GM10248 (cell line): ENCODE measurements at regions of chr18 and their contacts with region 1.

Region 1: GRCh38 chr18:79528846-79529245 is 133.1 kb downstream of the NFATC1 start:
- DNase-seq: peak; percentile 81
- CTCF ChIP-seq: peak; percentile 84

Region 2: DNA sequence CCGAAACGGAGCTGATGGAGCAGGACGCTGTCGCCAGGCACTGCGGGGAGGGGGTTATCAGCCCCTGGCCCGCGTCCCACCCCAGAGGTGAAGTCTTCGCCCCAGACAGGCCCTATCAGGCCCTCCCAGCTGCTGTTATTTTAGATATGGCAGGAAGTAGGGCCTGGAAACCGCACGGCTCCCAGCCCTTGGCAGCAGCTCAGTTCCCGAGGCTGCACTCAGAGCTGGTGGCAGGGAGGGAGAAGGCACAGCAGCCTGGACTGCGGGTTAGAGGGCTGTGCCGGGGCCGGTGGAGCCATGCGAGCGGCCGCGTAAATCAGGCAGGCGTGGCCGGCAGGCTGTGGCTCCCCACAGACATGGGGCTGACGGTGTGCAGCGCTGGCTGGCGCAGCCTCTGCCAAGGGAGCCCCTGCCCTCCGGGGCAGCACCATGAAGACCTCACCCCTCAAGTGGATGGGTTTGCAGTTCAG is 21.7 kb before region 1 on chr18:
- CTCF ChIA-PET with region 1: interaction called, 12 read pairs
- POLR2A ChIA-PET with region 1: interaction called, 3 read pairs
- DNase-seq: no peak
- CTCF ChIP-seq: no peak

Region 3: DNA sequence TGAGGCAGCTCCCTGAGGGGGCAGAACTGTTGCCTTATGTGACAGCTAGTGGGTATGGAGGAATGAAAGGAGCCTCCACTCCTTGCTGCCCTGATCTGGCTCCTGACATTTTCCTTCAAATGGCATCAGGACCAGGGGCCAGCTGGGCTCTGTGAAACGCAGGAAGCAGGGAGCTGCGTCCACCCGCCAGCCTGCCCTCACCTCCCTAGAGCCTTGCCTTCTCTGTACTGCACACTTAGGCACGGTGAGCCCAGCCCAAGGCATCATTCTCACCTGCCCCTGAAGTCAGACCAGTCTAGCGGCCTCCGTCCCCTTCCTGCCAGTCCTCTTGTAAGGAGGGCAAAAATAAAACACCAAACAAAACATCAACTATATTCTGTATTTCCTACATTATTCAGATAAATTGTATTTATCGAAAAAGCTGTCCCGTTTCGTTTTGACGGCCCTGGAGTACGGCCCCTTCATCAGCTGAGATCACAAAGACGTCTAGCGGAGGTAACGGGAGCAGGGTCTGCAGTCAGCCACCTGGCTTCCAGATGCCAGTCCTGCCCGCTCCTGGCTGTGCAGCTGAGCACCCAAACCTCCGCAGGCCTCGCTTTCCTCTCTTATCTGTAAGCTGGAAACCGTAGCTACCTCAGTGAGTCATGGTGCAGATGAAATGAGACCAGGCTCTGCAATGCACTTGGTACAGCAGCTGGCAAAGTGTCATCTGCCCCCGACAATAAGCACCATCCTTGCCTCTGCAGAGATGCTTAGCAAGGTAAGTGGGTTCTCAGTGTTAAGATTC is 143.8 kb after region 1 on chr18:
- CTCF ChIA-PET with region 1: no interaction called
- POLR2A ChIA-PET with region 1: no interaction called
- DNase-seq: no peak
- CTCF ChIP-seq: no peak